ENCODE measurements at regions of chr7 and their contacts with region 1.

Region 1: GRCh38 chr7:47945261-47946001 is 2.8 kb downstream of the PKD1L1 start:
- DNase-seq: peak; percentile 87
- ATAC-seq: peak; percentile 58
- H3K4me3 Mint-ChIP-seq: no peak overlapping the region
- H3K27ac Mint-ChIP-seq: no peak overlapping the region
- H3K4me1 Mint-ChIP-seq: no peaks in the 10 kb centered on the region
- H3K27me3 Mint-ChIP-seq: no peaks in the 10 kb centered on the region

Region 2: GRCh38 chr7:47956220-47956619 is 10.8 kb after region 1 on chr7:
- CTCF ChIA-PET with region 1: interaction called, 11 read pairs
- POLR2A ChIA-PET with region 1: no interaction called
- intact Hi-C with region 1: no loop called
- DNase-seq: no peak
- ATAC-seq: no peak
- H3K4me3 Mint-ChIP-seq: no peak overlapping the region
- H3K27ac Mint-ChIP-seq: no peak overlapping the region
- H3K4me1 Mint-ChIP-seq: peaks cover 11% of the 10 kb centered on the region
- H3K27me3 Mint-ChIP-seq: no peaks in the 10 kb centered on the region

Region 3: GRCh38 chr7:48101968-48102367 is 156.5 kb after region 1 on chr7:
- CTCF ChIA-PET with region 1: interaction called, 14 read pairs
- POLR2A ChIA-PET with region 1: no interaction called
- intact Hi-C with region 1: no loop called
- DNase-seq: peak; percentile 65
- ATAC-seq: peak; percentile 25
- H3K4me3 Mint-ChIP-seq: no peak overlapping the region
- H3K27ac Mint-ChIP-seq: no peak overlapping the region
- H3K4me1 Mint-ChIP-seq: peaks cover 29% of the 10 kb centered on the region
- H3K27me3 Mint-ChIP-seq: no peaks in the 10 kb centered on the region

Region 4: DNA sequence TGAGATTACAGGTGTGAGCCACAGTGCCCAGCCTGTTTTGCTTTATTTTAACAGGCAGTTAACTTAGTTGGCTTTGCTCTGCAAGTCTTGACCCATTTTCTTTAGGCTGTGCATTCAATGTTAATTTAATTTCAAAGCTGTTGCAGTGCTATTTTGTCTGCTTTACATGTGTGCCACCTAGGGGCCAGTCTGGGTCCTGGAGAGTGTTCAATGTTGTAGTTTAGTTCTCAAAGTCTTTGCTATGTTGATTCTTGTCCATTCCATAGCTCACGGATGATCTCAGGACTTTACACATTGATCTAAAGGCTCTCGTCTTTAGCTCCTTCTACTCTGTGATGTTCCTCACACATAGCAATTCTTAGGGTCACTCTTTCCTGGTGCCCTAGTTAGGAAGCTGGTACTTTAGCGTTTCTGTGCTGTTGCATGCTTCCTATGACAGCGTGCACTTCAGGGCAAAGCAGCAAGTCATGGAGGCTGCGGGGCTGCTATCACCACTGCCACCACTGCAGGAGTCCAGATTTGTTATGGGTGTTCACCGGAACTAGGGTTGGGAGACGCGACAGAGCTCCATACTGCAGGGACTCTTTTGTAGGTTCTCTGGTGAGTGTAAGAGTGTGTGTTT is 209.5 kb after region 1 on chr7:
- CTCF ChIA-PET with region 1: interaction called, 19 read pairs
- POLR2A ChIA-PET with region 1: no interaction called
- intact Hi-C with region 1: loop called (anchors 1 kb)
- DNase-seq: peak; percentile 57
- ATAC-seq: peak; percentile 55
- H3K4me3 Mint-ChIP-seq: no peak overlapping the region
- H3K27ac Mint-ChIP-seq: no peak overlapping the region
- H3K4me1 Mint-ChIP-seq: no peaks in the 10 kb centered on the region
- H3K27me3 Mint-ChIP-seq: peaks cover 17% of the 10 kb centered on the region